Left ventricle myocardium superior (tissue), 1 donor: ENCODE measurements at regions of chr22 and their contacts with region 1.

Region 1: GRCh38 chr22:22959147-22959827 is 71.7 kb downstream of the IGLL5 start:
- DNase-seq: peak; percentile 70
- ATAC-seq: peak; percentile 82

Region 2: DNA sequence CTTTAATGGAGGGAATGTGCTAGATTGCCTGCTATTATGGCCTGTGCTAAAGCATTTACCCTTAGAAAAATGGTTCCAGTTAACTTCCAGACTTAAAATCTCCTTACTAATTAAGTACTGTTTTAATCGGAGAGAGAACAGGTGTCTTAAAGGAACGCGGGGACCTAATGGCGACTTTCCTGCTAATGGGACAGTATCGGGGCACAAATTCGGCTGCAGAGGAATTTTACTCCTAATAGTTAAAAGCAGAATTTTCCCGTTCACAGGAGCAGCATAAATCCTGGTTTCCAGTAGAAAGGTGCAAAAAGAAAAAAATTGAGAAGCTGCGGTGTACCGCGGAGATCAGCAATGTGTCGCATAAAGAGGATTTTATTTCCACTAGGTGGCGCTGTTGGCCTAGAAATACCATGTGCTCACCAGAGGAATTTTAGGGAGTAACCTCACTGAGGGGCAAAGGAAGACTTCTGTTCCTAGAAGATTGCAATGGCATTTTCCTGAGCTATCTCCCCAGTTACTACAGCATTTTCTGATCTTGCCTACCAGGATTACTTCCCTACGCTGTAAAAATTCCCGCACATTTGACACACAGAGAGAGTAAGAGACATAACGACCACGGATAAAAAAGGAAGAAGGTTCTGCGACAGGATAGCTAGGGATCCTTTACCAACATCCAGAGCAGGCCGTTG is 495.3 kb before region 1 on chr22:
- intact Hi-C with region 1: loop called (anchors 10 kb)
- DNase-seq: no peak
- ATAC-seq: peak; percentile 65

Region 3: DNA sequence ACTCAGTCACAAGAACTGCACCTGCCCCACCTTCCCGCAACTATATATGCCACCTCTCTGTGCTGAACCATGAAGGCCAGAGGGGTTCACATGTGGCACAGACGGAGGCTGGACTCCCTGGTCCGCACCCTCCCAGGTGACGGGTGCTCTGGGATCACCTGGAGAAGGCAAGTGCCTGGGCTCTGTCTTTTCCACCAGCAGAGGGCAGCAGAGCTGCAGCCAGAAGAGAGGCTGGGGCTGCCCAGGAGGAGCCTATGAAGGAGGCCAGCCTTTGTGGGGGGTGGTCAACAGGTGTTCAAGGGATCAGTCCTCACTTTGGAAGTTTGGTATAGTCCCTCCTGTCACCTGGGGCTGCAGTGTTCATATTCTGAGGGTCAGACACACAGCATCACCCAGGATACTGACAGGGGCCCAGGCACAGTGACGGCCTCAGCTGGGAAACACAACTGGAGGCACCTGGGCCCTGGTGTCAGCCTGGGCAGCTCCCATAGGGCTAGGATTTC is 110.9 kb before region 1 on chr22:
- intact Hi-C with region 1: loop called (anchors 10 kb)
- DNase-seq: peak; percentile 66
- ATAC-seq: peak; percentile 71

Region 4: GRCh38 chr22:23128269-23129108 is 169.2 kb after region 1 on chr22:
- intact Hi-C with region 1: loop called (anchors 2 kb)
- DNase-seq: peak; percentile 69
- ATAC-seq: peak; percentile 89